ENCODE measurements at regions of chr14 and their contacts with region 1.

Region 1: DNA sequence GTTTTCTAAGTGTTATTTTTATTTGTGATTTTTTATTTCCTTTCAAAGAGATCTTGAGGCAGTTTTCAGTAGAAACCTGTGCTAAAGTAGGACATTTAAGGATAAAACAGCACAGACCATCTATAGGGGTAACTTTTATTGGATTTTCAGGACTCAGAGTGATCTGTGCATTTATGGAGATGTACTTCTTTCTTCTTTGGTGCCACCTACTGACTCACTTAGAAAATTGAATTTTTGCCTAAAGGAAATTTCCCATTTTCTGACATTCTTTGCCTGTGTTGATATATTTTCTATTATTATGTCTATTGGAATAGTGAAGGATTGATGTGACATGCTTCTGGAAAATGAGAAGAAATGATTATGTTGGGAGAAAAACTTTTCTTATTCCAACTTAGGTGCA is 113.0 kb downstream of the UNC79 start:
- DNase-seq: no peak
- CTCF ChIP-seq: peak; percentile 29

Region 2: DNA sequence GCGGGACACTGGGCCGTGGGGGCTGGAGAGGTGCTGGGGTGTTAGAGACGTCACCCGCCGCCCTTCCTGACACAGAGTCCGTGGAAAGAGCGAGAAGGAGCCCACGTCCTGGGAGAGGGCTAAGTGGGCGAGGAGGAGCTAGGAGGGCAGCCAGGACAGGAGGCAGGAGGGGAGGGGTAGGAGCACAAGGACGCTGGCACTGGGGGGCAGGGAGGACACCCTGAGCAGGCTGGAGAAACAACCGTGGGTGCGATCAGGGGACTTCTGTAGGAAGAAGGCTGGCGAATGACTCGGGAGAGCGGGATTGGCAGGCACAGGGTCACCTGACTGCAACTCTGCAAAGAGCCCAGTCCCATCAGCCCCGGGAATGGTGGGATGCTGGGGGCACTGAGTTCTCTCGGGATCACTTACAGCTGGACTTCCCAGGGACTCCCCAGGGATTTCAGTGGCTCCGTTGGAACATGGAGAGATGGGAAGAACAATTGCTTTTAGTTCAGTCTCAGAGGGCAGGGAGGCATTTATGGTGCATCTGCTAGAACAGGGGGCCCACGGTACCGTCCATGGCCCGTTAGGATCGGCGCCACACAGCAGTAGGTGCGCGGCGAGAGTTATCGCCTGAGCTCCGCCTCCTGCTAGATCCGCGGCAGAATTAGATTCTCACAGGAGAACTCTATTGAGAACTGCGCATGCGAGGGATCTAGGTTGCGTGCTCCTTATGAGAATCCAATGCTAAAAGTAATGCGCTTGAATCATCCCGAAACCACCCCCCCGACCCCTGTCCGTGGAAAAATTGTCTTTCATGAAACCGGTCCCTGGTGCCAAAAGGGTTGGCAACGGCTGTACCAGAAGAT is 312.4 kb before region 1 on chr14:
- in situ Hi-C with region 1: loop called (anchors 10 kb)
- DNase-seq: peak; percentile 55
- CTCF ChIP-seq: no peak

Region 3: GRCh38 chr14:94110552-94111181 is 566.9 kb after region 1 on chr14 and contains the start of gene IFI27:
- in situ Hi-C with region 1: no loop called
- DNase-seq: no peak
- CTCF ChIP-seq: no peak

Measured in GM13976 (cell line).